ENCODE measurements at regions of chr20 and their contacts with region 1.

Region 1: GRCh38 chr20:18276821-18277220 is 11.5 kb upstream of the ZNF133 start:
- DNase-seq: peak; percentile 61
- H3K4me3 Mint-ChIP-seq: no peak overlapping the region
- H3K27ac Mint-ChIP-seq: no peak overlapping the region
- H3K4me1 Mint-ChIP-seq: peaks cover 10% of the 10 kb centered on the region
- H3K27me3 Mint-ChIP-seq: peaks cover 19% of the 10 kb centered on the region

Region 2: DNA sequence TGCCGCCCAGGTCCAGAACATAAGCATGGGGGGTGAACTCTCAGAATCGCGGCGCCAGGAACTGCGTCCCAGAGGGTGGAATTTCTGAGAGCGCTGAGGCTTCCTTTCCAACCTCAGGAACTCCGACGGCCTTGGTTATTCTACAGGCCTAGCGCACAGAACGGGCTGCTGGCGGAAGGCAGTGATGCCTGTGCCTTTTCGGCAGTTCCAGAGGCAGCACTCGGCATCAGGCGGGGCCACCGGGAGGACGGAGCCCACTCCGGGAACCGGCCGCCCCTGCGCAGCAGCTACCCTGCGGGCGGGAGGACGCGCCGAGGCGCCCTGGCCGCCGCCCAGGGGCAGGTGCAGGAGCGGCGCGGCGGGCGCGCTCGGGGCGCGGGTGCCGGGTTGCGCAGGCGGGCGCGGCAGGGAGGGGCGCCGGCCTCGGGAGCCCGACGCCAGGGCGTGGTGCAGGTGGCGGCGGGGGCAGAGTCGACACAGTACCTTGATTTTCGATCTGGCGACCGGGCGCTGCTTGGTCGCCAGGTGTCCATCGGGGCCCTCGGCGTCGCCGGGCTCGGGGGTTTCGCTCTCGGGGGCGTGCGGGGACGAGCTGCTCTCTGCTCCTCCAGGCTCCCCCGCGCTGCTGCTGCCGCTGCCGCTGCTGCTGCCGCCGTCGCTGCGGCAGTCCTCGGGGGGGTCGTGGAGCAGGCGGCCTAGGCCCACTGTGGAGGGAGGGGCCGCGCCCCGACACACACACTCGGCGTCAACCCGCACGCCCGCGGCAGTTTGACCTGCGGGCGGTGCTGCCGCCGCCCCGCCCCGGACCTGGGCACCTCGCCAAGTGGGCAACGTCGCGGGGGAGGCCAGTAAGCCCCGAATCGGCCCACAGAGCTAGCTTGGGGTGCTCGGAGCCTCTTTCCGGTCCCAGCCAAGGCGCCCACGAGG is 220.4 kb before region 1 on chr20:
- intact Hi-C with region 1: loop called (anchors 5 kb)
- DNase-seq: no peak
- H3K4me3 Mint-ChIP-seq: peak overlapping the region; percentile 60
- H3K27ac Mint-ChIP-seq: no peak overlapping the region
- H3K4me1 Mint-ChIP-seq: no peaks in the 10 kb centered on the region
- H3K27me3 Mint-ChIP-seq: peaks cover 65% of the 10 kb centered on the region

Measured in activated T-helper 1 cell treated with anti-CD3 and anti-CD28 coated beads, Interleukin-12 subunit alpha, Interleukin-12 subunit beta, Interleukin-2, Interleukin-4 antibody, amounts not matched to agents 30 ng/mL and 10 ng/mL and 1 ng/mL, durations not matched to agents 14 hours and 24 hours and 36 hours (primary cell).